ENCODE measurements at regions of chr1 and their contacts with region 1.

Region 1: GRCh38 chr1:223087291-223088255 is 55.5 kb downstream of the TLR5 start:
- DNase-seq: no peak
- CTCF ChIP-seq: no peak

Region 2: GRCh38 chr1:222739465-222739864 is 348.1 kb before region 1 on chr1:
- CTCF ChIA-PET with region 1: interaction called, 12 read pairs
- POLR2A ChIA-PET with region 1: no interaction called
- DNase-seq: no peak
- CTCF ChIP-seq: no peak

Region 3: GRCh38 chr1:222792744-222793143 is 294.8 kb before region 1 on chr1:
- CTCF ChIA-PET with region 1: interaction called, 27 read pairs
- POLR2A ChIA-PET with region 1: no interaction called
- DNase-seq: peak; percentile 22
- CTCF ChIP-seq: peak; percentile 20

Region 4: DNA sequence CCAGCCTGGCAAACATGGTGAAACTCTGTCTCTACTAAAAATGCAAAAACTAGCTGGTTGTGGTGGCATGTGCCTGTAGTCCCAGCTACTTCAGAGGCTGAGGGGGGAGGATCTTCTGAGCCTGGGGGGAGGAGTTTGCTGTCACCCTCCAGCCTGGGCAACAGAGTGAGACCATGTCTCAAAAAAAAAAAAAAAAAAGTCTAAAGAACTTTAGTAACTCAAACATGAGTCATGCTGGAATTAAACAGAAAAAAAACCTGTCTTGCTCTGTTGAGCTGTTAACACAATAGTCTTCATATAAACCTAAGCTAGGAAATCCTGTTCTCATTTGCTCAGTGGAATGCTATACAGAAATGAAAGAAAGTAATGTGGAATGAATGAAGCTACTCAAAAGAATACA is 289.5 kb before region 1 on chr1:
- CTCF ChIA-PET with region 1: interaction called, 27 read pairs
- POLR2A ChIA-PET with region 1: no interaction called
- DNase-seq: no peak
- CTCF ChIP-seq: no peak

Region 5: GRCh38 chr1:223102797-223103533 is 15.4 kb after region 1 on chr1:
- CTCF ChIA-PET with region 1: interaction called, 11 read pairs
- POLR2A ChIA-PET with region 1: no interaction called
- DNase-seq: no peak
- CTCF ChIP-seq: no peak

Region 6: DNA sequence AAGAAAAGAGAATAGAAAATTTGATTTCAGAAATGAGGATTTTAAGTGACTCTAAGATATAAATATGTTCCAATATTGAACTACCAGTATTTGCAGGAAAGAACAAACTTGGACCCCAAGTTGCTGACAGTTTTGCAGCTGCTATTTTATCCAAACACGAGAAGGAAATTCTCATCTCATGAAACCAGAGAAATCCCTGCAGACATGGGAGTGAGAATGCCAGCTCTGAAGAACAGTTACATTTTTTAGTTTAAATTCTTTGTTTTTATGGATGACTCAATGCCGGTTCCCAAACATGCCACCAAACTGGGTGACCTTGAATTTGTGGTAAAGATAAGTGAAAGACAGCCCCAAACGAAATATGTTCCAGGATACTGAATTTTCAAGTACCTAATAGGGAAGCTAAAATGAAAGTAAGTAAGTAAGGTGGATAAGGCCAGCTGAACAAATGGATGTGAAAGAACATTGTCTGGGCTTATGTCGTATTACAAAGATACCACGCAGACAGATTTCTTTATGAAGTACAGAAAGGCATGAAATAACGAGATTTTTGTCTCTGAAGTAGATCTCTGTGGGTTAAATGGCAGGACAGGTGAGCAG is 35.5 kb after region 1 on chr1:
- CTCF ChIA-PET with region 1: interaction called, 11 read pairs
- POLR2A ChIA-PET with region 1: no interaction called
- DNase-seq: no peak
- CTCF ChIP-seq: no peak